ENCODE measurements at regions of chr1 and their contacts with region 1.

Region 1: DNA sequence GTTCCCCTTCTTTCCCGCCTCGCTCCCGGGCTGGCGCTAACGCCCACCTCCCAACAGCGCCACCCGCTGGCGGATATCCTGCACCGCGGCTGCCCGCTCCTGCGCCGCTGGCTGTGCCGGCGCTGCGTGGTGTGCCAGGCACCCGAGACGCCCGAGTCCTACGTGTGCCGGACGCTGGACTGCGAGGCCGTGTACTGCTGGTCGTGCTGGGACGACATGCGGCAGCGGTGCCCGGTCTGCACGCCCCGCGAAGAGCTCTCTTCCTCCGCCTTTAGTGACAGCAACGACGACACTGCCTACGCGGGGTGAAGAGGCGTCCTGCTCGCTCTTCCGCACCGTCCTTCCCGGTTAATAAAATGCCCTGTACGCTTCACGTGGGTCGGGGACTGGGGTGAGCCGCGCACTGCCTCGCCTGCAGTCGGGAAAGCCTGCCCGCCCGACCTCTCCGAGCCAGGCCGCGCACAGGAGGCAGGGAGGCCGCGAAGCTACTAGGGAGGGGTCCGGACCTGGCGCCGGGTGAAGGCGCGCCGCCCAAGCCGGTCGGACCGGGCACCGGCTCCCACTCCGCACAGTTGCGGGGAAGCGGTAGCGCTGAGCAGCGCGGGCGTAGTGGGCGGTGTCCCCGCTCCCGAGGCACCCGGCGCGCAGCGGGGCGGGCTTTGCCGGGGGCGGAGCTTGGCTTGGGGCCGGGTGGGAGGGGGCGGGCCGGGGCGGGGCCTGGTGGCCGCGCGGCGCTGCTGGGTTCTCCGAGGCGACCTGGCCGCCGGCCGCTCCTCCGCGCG is at the start of gene ADAM15:
- DNase-seq: peak; percentile 64 to 88
- H3K4me3 ChIP-seq: peak within 1 kb of the TSS; percentile 73
- H3K27ac ChIP-seq: peak within 1 kb of the TSS; percentile 67
- H3K4me1 ChIP-seq: peaks cover 34% of the 10 kb centered on the region
- H3K27me3 ChIP-seq: no peaks in the 10 kb centered on the region
- CTCF ChIP-seq: peak; percentile 89
- total RNA-seq, gene ADAM15: 187 and 195 TPM in 2 replicates

Region 2: DNA sequence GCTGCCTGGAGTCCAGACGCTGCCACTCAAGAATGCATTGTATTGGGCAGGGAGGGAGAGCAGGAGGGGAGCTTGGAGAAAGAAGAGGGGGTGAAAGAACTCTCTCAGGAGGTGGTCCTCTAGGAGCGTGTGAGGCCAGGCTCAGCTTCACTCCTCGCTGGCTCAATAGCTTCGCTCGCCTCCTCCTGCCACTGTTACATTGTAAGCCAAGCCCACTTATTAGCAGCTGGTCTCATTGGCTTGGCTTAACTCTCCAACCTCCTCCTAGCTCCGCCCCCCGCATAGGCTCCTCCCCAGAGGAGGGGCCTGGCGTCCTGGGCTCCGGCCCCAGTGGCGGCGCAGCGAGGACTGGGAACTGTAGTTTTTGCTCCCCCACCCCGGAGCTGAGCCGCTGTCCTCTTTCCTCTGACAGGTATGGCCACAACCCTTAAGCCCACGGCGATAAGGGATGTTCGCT is 180.6 kb before region 1 on chr1 and contains the start of gene KCNN3:
- CTCF ChIA-PET with region 1: interaction called, 17 read pairs
- POLR2A ChIA-PET with region 1: no interaction called
- intact Hi-C with region 1: no loop called
- DNase-seq: peak; percentile 42 to 85
- H3K4me3 ChIP-seq: no peak within 1 kb of the TSS
- H3K27ac ChIP-seq: no peak within 1 kb of the TSS
- H3K4me1 ChIP-seq: no peaks in the 10 kb centered on the region
- H3K27me3 ChIP-seq: peaks cover 72% of the 10 kb centered on the region
- CTCF ChIP-seq: no peak
- total RNA-seq, gene KCNN3: 0.33 and 1.1 TPM in 2 replicates

Region 3: GRCh38 chr1:154878371-154879022 is 172.3 kb before region 1 on chr1:
- CTCF ChIA-PET with region 1: interaction called, 11 read pairs
- POLR2A ChIA-PET with region 1: no interaction called
- intact Hi-C with region 1: no loop called
- DNase-seq: peak in 1 of 2 experiments; percentile 75
- H3K4me3 ChIP-seq: no peak overlapping the region
- H3K27ac ChIP-seq: no peak overlapping the region
- H3K4me1 ChIP-seq: peaks cover 13% of the 10 kb centered on the region
- H3K27me3 ChIP-seq: peaks cover 59% of the 10 kb centered on the region; the same call in 1 of the 2 replicates
- CTCF ChIP-seq: peak; percentile 89

Region 4: DNA sequence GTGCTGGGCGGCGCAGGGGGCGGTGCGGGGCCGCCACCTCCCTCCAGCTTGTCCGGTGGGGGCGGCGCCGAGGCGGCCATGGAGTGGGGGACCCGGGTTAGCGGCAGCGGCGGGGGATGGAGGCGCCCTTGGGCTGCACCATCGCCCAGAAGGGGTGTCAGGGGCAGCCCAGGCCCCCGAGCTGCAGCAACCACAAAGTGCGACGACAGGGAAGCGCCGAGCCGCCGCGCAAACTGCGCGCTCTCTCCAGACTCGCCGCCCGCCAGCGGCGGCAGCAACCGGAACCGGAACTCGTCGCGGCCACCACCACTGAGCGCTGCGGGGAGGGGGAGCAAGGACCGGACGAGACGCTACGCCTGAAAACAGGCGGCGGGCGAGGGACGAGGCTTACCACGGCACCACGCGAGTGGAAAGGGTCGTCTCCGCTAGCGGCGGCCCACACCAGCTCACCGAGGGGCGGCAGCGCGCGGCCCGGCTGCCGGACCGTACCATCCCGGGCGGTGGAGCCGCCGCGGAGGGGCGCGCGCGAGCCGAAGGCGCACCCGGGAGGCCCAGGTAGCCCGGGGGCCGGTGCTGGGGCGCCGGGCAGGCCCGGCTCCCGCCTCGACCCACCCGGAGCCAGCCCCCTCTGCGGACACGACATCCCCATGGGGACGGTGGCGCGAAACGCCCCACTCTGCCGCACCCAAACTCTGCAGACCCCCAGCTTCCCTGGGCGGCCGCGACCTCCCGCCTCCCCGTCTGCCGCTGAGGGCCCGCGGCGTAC is 89.1 kb before region 1 on chr1 and contains the start of gene PYGO2:
- CTCF ChIA-PET with region 1: interaction called, 3 read pairs
- POLR2A ChIA-PET with region 1: no interaction called
- intact Hi-C with region 1: loop called (anchors 2 kb)
- DNase-seq: peak; percentile 64 to 88
- H3K4me3 ChIP-seq: peak within 1 kb of the TSS; percentile 78
- H3K27ac ChIP-seq: peak within 1 kb of the TSS; percentile 72
- H3K4me1 ChIP-seq: peaks cover 18% of the 10 kb centered on the region
- H3K27me3 ChIP-seq: no peaks in the 10 kb centered on the region
- CTCF ChIP-seq: peak; percentile 60; the same call in 1 of the 2 replicates
- total RNA-seq, gene PYGO2: 30.0 and 33.2 TPM in 2 replicates

Region 5: GRCh38 chr1:155105604-155106022 is 54.9 kb after region 1 on chr1:
- CTCF ChIA-PET with region 1: no interaction called
- POLR2A ChIA-PET with region 1: no interaction called
- intact Hi-C with region 1: no loop called
- DNase-seq: no peak
- H3K4me3 ChIP-seq: no peak overlapping the region
- H3K27ac ChIP-seq: no peak overlapping the region
- H3K4me1 ChIP-seq: no peaks in the 10 kb centered on the region
- H3K27me3 ChIP-seq: no peaks in the 10 kb centered on the region
- CTCF ChIP-seq: no peak